ENCODE measurements at regions of chr6 and their contacts with region 1.

Region 1: GRCh38 chr6:33271458-33272274 is at the starts of genes RPS18 and VPS52:
- DNase-seq: peak; percentile 89

Region 2: DNA sequence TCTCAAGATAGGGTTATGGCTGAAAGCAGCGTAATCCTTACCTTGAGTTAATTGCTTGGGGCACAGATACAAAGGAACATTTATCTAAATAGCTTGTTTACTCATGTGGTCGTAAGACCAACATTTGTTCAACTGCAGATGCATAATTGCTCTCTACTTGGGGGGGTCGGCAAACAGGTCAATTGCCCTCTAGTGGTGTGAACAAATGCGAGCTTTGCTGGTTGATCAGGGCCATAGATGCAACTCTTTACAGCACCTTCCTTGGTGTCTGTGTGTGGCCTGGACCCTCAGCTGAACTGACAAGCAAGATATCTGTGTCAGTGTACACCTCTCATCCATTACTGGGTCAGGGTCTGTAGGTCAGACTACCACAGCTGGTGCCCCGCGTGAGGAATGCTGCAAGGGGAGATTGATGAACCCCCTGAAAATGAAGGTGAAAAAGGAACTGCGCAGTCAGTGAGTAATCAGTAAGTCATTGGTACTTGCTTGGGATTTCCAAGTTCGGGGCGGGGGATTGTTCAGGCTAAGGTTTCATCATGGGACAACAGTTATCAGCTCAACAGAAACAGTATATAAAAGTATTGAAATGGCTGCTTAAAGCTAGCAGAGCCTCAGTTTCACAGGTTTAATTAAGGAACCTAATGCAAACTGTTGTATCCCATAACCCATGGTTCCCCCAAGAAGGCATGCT is 222.2 kb before region 1 on chr6:
- CTCF ChIA-PET with region 1: no interaction called
- POLR2A ChIA-PET with region 1: no interaction called
- DNase-seq: no peak

Region 3: GRCh38 chr6:33208091-33208967 is 63.3 kb before region 1 on chr6 and contains the start of gene RING1:
- CTCF ChIA-PET with region 1: no interaction called
- POLR2A ChIA-PET with region 1: interaction called, 15 read pairs
- DNase-seq: peak; percentile 89

Region 4: GRCh38 chr6:33288921-33289748 is 17.5 kb after region 1 on chr6 and contains the starts of genes PFDN6 and WDR46:
- CTCF ChIA-PET with region 1: no interaction called
- POLR2A ChIA-PET with region 1: interaction called, 37 read pairs
- DNase-seq: peak; percentile 86

Region 5: GRCh38 chr6:33299237-33299944 is 27.7 kb after region 1 on chr6:
- CTCF ChIA-PET with region 1: interaction called, 16 read pairs
- POLR2A ChIA-PET with region 1: interaction called, 36 read pairs
- DNase-seq: peak; percentile 86

Region 6: DNA sequence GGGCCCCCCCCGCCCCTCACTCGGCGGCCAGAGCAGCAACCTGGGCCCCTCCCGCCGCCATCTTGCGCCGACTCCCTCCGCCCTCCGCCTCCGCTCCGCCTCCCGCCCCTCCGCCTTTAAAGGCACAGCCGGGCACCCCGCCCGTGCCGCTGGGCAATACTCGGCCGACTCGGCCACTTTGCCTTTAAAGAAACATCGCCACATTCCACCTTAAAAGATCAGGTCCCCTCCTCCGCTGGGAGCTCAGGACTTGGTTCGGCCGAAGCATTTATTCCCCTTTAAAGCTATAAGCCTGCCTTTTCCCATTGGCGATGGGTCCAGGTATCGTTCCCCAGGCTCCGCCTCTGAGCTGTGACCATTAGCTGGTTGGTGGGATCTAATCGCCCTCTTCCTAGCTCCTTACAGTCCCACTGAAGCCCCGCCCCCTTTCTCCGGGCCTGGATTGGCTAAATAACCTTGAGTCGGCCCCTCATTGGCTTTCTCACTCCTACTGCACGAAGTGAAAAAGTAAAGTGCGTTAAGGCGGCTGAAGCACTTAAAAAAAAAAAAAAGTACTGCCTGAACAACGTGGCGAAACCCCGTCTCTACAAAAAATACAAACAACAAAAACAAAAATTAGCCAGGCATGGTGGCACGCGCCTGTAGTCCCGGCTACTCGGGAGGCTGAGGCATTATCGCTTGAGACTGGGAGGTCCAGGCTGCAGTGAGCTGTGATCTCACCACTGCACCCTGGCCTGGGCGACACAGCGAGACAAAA is 46.2 kb after region 1 on chr6 and contains the start of gene ZBTB22:
- CTCF ChIA-PET with region 1: no interaction called
- POLR2A ChIA-PET with region 1: interaction called, 17 read pairs
- DNase-seq: peak; percentile 87

Region 7: DNA sequence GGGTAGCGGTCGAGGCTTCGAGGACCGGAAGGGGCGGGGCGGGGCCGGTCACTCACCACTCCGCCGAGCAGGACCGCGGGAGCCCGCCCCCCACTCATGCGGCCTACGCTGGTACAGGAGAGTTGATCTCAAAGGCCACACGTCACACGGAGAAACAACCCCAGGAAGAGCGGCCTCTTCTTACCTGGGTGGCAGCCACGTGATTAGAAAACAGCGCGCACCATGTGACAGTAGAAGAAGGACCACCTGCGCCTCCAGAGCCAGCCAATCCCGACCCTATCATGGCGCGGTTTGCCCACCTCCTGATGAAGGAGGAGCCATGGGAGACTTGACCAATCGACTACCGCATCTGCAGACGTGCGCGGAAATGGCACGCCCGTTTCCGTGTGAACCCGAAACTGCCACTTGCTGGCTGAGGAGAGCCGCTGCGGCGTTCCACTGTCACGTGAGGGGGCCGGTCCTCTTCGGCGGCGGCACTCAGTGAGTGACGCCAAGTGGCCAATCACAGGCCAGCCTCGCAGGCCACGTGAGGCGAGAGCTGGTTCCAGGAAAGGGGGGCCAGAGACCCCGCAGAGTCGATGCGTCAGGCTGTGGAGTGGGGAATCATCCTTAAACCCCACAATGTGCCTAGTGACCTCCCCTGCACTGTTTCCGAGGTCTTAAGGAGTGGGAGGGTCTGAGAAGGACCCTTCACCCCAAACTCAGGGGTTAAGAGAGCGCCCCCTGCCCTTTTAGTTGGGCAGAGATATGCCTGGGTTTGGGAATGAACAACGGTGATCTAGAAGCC is 146.4 kb after region 1 on chr6 and contains the start of gene CUTA:
- CTCF ChIA-PET with region 1: no interaction called
- POLR2A ChIA-PET with region 1: interaction called, 11 read pairs
- DNase-seq: peak; percentile 92

Region 8: GRCh38 chr6:33599413-33599911 is 327.8 kb after region 1 on chr6:
- CTCF ChIA-PET with region 1: no interaction called
- POLR2A ChIA-PET with region 1: no interaction called
- DNase-seq: no peak

Region 9: DNA sequence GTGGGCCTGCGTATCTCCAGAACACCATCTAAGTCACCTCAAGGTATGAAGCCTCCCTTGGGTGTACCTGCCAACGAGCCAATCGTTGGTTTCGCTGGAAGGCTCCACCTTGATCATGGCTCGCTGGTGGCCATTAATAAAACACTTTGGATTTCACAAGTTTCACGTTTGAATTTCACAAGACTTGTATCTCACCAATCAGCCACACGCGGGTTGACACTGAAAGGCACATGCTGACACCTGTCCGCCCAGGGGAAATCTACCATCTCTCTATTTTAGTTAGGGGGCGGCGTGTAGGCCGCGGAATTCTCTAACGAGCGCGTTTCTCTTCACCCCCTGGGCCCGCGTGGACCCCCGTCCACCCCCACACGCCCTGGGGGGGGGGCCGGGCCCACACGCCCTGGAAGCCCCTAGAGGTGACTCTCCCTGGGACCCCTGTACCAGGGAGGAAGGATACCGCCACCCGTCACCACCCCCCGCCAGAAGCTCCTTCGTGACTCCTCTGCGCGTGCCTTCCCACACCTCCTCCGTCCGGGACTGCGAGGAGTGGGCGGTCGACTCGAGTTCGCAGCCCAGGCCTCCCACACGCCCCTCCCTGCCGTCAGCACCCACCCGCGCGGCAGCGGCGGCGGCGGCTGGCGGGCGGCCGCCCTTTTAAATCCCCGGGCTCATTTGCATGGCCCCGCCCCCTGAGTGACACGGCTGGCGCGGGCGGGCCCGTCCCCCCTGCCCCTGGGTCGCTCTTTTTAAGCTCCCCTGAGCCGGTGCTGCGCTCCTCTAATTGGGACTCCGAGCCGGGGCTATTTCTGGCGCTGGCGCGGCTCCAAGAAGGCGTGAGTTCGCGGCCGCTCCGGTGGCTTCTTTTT is 964.7 kb after region 1 on chr6 and contains the start of gene HMGA1:
- CTCF ChIA-PET with region 1: no interaction called
- POLR2A ChIA-PET with region 1: no interaction called
- DNase-seq: peak; percentile 92